CD4-positive, alpha-beta memory T cell (primary cell): ENCODE measurements at regions of chr6 and their contacts with region 1.

Region 1: DNA sequence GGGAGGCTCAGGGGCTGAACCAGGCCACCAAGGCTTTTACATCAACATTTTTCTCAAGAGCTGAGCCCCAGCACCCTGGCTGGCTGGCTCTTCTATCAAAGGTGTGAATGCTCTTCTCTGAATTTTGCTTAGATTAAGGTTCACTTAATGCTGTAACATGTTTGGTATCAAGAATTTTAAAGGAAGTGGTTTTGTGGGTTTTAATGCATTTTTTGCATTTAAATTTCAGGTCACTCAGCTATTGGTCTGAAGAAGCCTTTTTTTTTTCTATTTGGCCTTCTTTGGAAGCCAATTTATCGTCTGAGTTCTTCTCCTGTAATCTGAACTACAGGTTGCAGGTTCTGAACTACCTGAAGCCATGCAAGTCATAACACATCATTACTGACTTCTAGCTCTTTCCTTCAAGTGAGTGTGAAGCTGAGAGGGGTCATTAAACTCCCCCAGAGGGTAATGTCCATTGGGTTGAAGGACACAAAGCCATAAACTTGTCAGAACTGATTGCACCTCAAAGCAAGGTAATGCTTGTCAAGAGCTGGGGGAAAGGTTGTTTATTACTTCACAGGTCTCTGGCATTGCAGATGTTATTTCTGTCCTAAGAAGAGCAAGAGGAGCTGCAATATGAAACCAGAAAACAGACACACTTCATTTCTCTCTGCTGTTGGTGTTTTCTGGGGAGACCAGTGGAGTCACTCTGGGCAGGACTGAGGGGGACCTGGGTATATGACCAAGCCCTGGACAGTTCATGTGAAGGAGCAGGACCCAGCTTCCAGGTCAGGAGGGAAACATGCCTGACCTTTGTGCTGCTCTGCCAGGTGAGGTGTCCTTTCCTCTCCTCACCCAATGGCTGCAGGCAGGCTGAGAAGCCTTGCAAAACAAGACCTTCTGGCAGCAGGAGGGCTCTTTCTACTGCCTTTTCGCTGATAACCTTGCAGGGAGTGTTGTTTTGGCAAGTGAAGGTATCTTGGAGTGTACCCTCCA is 26.1 kb upstream of the NEDD9 start:
- DNase-seq: peak; percentile 54 to 70 (median 66)
- H3K4me3 ChIP-seq: no peak overlapping the region
- H3K4me3 Mint-ChIP-seq: peak overlapping the region; percentile 3 to 65 (median 46)
- H3K27ac ChIP-seq: peak overlapping the region; percentile 38
- H3K27ac Mint-ChIP-seq: peak overlapping the region; percentile 63 to 96 (median 88)
- H3K4me1 ChIP-seq: peaks cover 62% of the 10 kb centered on the region
- H3K4me1 Mint-ChIP-seq: peaks cover 55 to 86% (median 69%) of the 10 kb centered on the region in 4 donors
- H3K27me3 ChIP-seq: no peaks in the 10 kb centered on the region
- H3K27me3 Mint-ChIP-seq: no peaks in the 10 kb centered on the region

Region 2: GRCh38 chr6:10759312-10759839 is 499.2 kb before region 1 on chr6:
- CTCF ChIA-PET with region 1: no interaction called
- POLR2A ChIA-PET with region 1: no interaction called
- intact Hi-C with region 1: no loop called
- DNase-seq: peak in 3 of 5 donors; percentile 13 to 23 (median 16)
- H3K4me3 ChIP-seq: no peak overlapping the region
- H3K4me3 Mint-ChIP-seq: no peak overlapping the region
- H3K27ac ChIP-seq: no peak overlapping the region
- H3K27ac Mint-ChIP-seq: peak overlapping the region in 1 of 7 donors; percentile 53
- H3K4me1 ChIP-seq: no peaks in the 10 kb centered on the region
- H3K4me1 Mint-ChIP-seq: peaks cover 10 to 26% (median 20%) of the 10 kb centered on the region in 4 donors
- H3K27me3 ChIP-seq: no peaks in the 10 kb centered on the region
- H3K27me3 Mint-ChIP-seq: no peaks in the 10 kb centered on the region

Region 3: GRCh38 chr6:11224252-11224965 is 34.1 kb before region 1 on chr6:
- CTCF ChIA-PET with region 1: interaction called, 3 read pairs
- POLR2A ChIA-PET with region 1: interaction called, 11 read pairs
- intact Hi-C with region 1: no loop called
- DNase-seq: peak; percentile 58 to 69 (median 61)
- H3K4me3 ChIP-seq: peak overlapping the region in 1 of 2 donors; percentile 54
- H3K4me3 Mint-ChIP-seq: peak overlapping the region; percentile 66 to 89 (median 83)
- H3K27ac ChIP-seq: peak overlapping the region; percentile 43
- H3K27ac Mint-ChIP-seq: peak overlapping the region; percentile 80 to 97 (median 96)
- H3K4me1 ChIP-seq: peaks cover 45% of the 10 kb centered on the region
- H3K4me1 Mint-ChIP-seq: peaks cover 34 to 70% (median 45%) of the 10 kb centered on the region in 4 donors
- H3K27me3 ChIP-seq: no peaks in the 10 kb centered on the region
- H3K27me3 Mint-ChIP-seq: no peaks in the 10 kb centered on the region

Region 4: DNA sequence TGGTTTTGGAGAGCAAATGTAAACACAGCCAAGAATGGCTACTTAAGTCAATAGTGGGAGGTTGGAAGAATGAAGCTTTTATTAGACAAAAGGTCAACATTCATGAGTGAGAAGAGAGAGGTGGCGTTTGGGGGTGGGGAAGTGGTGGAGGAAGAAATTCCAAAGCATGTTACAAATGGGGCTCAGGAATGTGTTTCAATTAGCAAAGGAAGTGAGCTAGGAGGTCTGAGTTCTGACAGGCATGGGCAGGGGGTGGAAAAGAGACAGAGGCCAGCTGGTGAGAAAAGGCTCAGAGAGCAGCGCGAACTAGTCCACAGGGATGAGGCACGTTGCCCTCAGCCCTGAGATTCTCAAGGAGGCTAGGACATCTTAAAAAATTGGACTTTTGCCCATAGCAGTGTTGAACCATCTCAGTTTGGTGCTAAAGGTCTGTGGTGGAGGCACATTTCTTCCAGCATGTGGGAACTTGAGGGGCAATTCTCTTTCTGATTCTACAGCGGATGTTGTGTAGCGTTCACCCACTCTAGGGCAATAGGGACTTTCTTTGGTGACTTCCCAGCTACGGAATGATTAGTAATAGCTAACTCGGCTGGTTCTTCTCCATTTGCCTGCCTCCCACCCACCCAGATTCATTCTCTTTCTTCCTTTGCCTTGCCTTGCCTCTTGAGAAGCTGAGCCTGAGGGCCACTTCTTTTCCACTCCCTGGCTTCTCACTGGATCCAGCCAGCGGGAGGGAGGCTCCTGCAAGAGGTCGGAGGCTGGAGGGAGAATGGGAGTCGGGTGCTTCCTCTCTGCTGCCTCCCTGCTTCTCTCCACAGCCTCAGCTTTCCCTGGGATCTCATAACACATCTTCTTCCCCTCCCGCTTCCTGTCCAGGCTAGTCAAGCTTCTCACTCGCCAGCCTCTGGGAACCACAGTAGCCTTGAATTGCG is 19.0 kb after region 1 on chr6:
- CTCF ChIA-PET with region 1: interaction called, 3 read pairs
- POLR2A ChIA-PET with region 1: interaction called, 9 read pairs
- intact Hi-C with region 1: loop called (anchors 2 kb)
- DNase-seq: peak in 4 of 5 donors; percentile 9 to 64 (median 23)
- H3K4me3 ChIP-seq: peak overlapping the region in 1 of 2 donors; percentile 4
- H3K4me3 Mint-ChIP-seq: peak overlapping the region; percentile 4 to 72 (median 60)
- H3K27ac ChIP-seq: peak overlapping the region; percentile 35
- H3K27ac Mint-ChIP-seq: peak overlapping the region; percentile 54 to 97 (median 88)
- H3K4me1 ChIP-seq: peaks cover 50% of the 10 kb centered on the region
- H3K4me1 Mint-ChIP-seq: peaks cover 48 to 66% (median 58%) of the 10 kb centered on the region in 4 donors
- H3K27me3 ChIP-seq: no peaks in the 10 kb centered on the region
- H3K27me3 Mint-ChIP-seq: no peaks in the 10 kb centered on the region

Region 5: GRCh38 chr6:11317885-11318771 is 59.6 kb after region 1 on chr6:
- CTCF ChIA-PET with region 1: no interaction called
- POLR2A ChIA-PET with region 1: no interaction called
- intact Hi-C with region 1: loop called (anchors 5 kb)
- DNase-seq: peak; percentile 55 to 89 (median 74)
- H3K4me3 ChIP-seq: no peak overlapping the region
- H3K4me3 Mint-ChIP-seq: peak overlapping the region in 7 of 8 donors; percentile 3 to 49 (median 27)
- H3K27ac ChIP-seq: peak overlapping the region; percentile 42
- H3K27ac Mint-ChIP-seq: peak overlapping the region; percentile 79 to 96 (median 91)
- H3K4me1 ChIP-seq: peaks cover 26% of the 10 kb centered on the region
- H3K4me1 Mint-ChIP-seq: peaks cover 33 to 58% (median 42%) of the 10 kb centered on the region in 4 donors
- H3K27me3 ChIP-seq: no peaks in the 10 kb centered on the region
- H3K27me3 Mint-ChIP-seq: no peaks in the 10 kb centered on the region